ENCODE measurements at regions of chr4 and their contacts with region 1.

Region 1: GRCh38 chr4:15882675-15883086 is 55.9 kb downstream of the FGFBP1 start:
- DNase-seq: peak; percentile 44
- ATAC-seq: peak; percentile 97
- H3K4me3 Mint-ChIP-seq: no peak overlapping the region
- H3K27ac Mint-ChIP-seq: no peak overlapping the region
- H3K4me1 Mint-ChIP-seq: 0 out of 2 replicates have a peak, but pooled peaks cover 3% of the 10 kb centered on the region
- H3K27me3 Mint-ChIP-seq: no peaks in the 10 kb centered on the region
- CTCF ChIP-seq: peak; percentile 66

Region 2: DNA sequence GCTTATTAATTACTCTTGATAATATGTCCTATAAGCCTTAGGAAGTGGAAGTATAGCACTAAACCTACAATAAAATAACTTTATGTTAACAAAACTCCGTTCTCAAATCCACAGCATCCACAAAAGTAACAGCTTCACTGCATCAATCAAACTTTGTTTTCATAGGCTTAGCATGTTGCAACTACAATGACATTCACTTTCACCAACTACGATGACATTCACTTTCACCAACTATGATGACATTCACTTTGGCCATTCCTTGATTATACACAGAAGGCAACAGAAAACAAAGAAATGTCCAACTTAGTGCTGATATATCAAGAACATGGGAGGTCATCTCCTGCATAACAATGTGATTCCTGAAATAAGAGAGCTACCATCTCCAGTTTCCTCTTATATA is 271.8 kb before region 1 on chr4:
- CTCF ChIA-PET with region 1: no interaction called
- POLR2A ChIA-PET with region 1: no interaction called
- DNase-seq: no peak
- ATAC-seq: no peak
- H3K4me3 Mint-ChIP-seq: no peak overlapping the region
- H3K27ac Mint-ChIP-seq: no peak overlapping the region
- H3K4me1 Mint-ChIP-seq: peaks cover 13% of the 10 kb centered on the region
- H3K27me3 Mint-ChIP-seq: no peaks in the 10 kb centered on the region
- CTCF ChIP-seq: no peak

Region 3: DNA sequence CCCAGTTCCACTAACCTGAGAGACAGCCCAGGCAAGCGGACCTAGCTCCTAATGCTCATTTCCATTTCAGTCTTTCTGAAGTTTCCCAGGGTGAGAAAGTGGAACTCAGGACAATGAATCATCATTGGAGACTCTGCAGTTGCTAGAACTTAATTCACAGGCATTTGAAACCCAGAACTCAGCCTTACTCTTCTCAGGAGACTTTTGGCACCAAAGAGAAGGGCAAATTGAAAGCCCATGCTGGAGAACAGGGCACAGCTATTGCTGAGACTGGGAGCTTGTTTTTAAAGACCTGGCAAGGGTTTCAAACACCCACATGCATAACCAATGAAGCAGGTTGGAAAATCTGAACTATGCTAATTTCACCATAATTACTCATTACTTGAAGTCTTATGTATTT is 143.8 kb before region 1 on chr4:
- CTCF ChIA-PET with region 1: interaction called, 11 read pairs
- POLR2A ChIA-PET with region 1: no interaction called
- DNase-seq: no peak
- ATAC-seq: no peak
- H3K4me3 Mint-ChIP-seq: no peak overlapping the region
- H3K27ac Mint-ChIP-seq: no peak overlapping the region
- H3K4me1 Mint-ChIP-seq: peaks cover 8% of the 10 kb centered on the region
- H3K27me3 Mint-ChIP-seq: no peaks in the 10 kb centered on the region
- CTCF ChIP-seq: no peak

Region 4: DNA sequence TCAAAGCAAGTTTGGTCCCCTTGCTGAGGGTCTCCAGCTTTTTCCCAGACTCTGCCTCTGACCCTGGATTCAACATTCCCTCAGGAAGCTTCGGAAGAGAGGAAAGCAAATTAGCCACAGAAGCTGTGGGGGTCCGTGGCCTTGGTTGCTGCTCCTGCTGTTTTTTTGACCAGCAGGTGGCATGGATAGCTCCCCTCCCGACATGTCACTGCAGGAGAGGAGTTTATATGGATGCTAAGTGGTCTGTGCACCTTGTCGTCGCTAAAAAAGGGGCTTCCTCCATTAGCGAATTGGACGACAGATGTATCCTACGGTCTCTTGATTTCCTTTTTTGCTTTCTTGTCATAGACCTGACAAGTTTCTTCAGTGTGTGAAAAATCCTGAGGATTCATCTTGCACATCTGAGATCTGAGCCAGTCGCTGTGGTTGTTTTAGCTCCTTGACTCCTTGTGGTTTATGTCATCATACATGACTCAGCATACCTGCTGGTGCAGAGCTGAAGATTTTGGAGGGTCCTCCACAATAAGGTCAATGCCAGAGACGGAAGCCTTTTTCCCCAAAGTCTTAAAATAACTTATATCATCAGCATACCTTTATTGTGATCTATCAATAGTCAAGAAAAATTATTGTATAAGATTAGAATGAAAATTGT is 34.4 kb before region 1 on chr4:
- CTCF ChIA-PET with region 1: interaction called, 12 read pairs
- POLR2A ChIA-PET with region 1: no interaction called
- DNase-seq: no peak
- ATAC-seq: no peak
- H3K4me3 Mint-ChIP-seq: no peak overlapping the region
- H3K27ac Mint-ChIP-seq: no peak overlapping the region
- H3K4me1 Mint-ChIP-seq: peaks cover 4% of the 10 kb centered on the region
- H3K27me3 Mint-ChIP-seq: no peaks in the 10 kb centered on the region; the same call in 1 of the 2 replicates
- CTCF ChIP-seq: no peak

Region 5: DNA sequence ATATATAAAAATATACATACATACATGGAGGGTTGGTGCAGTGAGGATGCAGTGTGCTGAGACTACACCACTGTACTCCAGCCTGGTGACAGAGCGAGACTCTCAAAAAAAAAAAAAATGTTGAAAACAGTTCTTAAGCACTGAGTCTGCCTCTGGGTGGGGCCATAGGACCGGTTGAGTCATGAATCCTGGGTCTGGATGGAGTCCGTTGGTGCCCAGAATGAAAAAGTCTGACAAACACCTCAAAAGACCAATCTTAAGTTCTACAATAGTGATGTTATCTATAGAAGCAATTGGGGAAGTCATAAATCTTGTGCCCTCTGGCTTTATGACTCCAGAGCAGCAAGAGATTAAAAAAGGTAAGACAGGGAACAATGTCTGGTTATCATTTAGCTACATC is 14.6 kb before region 1 on chr4:
- CTCF ChIA-PET with region 1: interaction called, 13 read pairs
- POLR2A ChIA-PET with region 1: no interaction called
- DNase-seq: no peak
- ATAC-seq: peak; percentile 85
- H3K4me3 Mint-ChIP-seq: no peak overlapping the region
- H3K27ac Mint-ChIP-seq: no peak overlapping the region
- H3K4me1 Mint-ChIP-seq: no peaks in the 10 kb centered on the region
- H3K27me3 Mint-ChIP-seq: no peaks in the 10 kb centered on the region; the same call in 1 of the 2 replicates
- CTCF ChIP-seq: no peak

Region 6: GRCh38 chr4:15906024-15906443 is 23.4 kb after region 1 on chr4:
- CTCF ChIA-PET with region 1: interaction called, 22 read pairs
- POLR2A ChIA-PET with region 1: no interaction called
- DNase-seq: peak; percentile 22
- ATAC-seq: peak; percentile 89
- H3K4me3 Mint-ChIP-seq: peak overlapping the region; percentile 31; the same call in 1 of the 2 replicates
- H3K27ac Mint-ChIP-seq: no peak overlapping the region
- H3K4me1 Mint-ChIP-seq: no peaks in the 10 kb centered on the region
- H3K27me3 Mint-ChIP-seq: no peaks in the 10 kb centered on the region; the same call in 1 of the 2 replicates
- CTCF ChIP-seq: no peak

Region 7: GRCh38 chr4:15938182-15938581 is 55.5 kb after region 1 on chr4:
- CTCF ChIA-PET with region 1: interaction called, 20 read pairs
- POLR2A ChIA-PET with region 1: no interaction called
- DNase-seq: peak; percentile 25
- ATAC-seq: peak; percentile 81
- H3K4me3 Mint-ChIP-seq: no peak overlapping the region
- H3K27ac Mint-ChIP-seq: no peak overlapping the region
- H3K4me1 Mint-ChIP-seq: peaks cover 11% of the 10 kb centered on the region
- H3K27me3 Mint-ChIP-seq: no peaks in the 10 kb centered on the region
- CTCF ChIP-seq: no peak

Region 8: DNA sequence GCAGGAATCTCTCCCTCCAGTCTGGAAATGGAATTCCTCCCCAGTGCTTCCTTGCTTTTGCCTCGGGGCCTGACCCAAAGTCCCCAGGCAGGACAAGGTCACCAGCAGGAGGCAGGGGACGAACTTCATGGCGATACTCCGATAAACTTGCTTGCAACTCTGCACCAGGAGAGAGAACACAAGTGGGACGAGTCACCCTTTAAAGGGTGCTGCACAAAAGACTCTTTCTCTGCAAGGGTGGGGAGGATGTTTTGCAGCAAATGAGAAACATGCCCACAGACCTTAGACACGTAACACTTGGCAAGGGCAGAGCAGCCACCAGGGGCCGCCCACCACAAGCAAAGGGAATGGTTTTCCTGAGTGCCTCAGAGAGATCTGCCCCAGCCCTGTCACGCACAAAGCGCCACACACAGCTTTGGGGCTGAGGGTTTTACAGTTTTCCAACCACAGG is 80.3 kb after region 1 on chr4 and contains the start of gene FGFBP2:
- CTCF ChIA-PET with region 1: interaction called, 32 read pairs
- POLR2A ChIA-PET with region 1: no interaction called
- DNase-seq: peak; percentile 73
- ATAC-seq: peak; percentile 88
- H3K4me3 Mint-ChIP-seq: no peak within 1 kb of the TSS
- H3K27ac Mint-ChIP-seq: no peak within 1 kb of the TSS
- H3K4me1 Mint-ChIP-seq: peaks cover 15% of the 10 kb centered on the region
- H3K27me3 Mint-ChIP-seq: no peaks in the 10 kb centered on the region; the same call in 1 of the 2 replicates
- CTCF ChIP-seq: 0 out of 2 replicates have a peak, but pooled peaks have one; percentile 28
- total RNA-seq, gene FGFBP2: 0.24 TPM in 1 of 3 replicates, not detected in the others